Lower lobe of right lung (tissue), 2 donors: ENCODE measurements at regions of chr16 and their contacts with region 1.

Region 1: DNA sequence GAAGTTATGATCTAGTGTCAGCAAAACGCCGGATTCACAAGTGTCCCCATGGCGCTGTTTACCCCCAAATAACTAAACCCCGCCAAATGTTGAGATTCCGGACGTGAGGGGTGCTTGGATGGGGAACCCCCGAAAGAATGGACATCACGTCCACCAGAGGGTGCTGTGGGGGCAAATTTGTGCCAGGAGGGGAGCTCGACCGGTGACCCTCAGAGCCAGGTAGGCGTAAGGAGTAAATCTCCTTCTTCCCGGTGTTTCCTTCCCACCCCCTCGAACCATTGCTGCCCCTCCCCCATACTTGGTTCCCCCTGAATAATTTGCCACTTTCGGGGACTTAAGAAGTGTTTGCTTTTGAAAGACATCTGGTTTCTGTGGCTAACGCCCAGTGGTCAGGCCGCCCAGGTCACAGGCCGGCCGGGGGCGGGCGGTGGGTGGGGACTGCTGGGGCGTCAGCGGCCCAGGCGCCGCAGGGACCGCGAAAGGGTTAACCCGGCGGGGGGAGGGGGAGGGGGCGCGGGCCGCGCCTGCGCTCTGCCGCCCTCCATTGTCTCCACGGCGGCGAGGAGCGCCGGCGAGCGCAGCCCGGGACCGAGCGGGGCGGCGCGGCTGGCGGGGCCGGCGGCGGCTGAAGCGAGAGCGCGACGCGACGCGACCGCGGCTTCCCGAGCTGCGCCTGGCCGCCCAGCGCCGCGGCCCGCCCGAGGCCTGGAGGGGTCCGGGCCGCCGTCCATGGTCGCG is at the start of gene ZNRF1:
- DNase-seq: peak; percentile 86
- ATAC-seq: peak; percentile 90 to 94
- H3K4me3 ChIP-seq: peak within 1 kb of the TSS; percentile 82
- H3K27ac ChIP-seq: peak within 1 kb of the TSS; percentile 83
- H3K4me1 ChIP-seq: peaks cover 35% of the 10 kb centered on the region
- H3K27me3 ChIP-seq: no peaks in the 10 kb centered on the region
- CTCF ChIP-seq: peak; percentile 79
- total RNA-seq, gene ZNRF1: 23.5 TPM

Region 2: GRCh38 chr16:75110637-75111513 is 112.2 kb after region 1 on chr16:
- intact Hi-C with region 1: loop called (anchors 5 kb)
- DNase-seq: peak; percentile 91
- ATAC-seq: peak; percentile 84 to 87
- H3K4me3 ChIP-seq: peak overlapping the region; percentile 24
- H3K27ac ChIP-seq: peak overlapping the region; percentile 74
- H3K4me1 ChIP-seq: peaks cover 75% of the 10 kb centered on the region
- H3K27me3 ChIP-seq: no peaks in the 10 kb centered on the region
- CTCF ChIP-seq: peak; percentile 93